ENCODE measurements at regions of chr10 and their contacts with region 1.

Region 1: DNA sequence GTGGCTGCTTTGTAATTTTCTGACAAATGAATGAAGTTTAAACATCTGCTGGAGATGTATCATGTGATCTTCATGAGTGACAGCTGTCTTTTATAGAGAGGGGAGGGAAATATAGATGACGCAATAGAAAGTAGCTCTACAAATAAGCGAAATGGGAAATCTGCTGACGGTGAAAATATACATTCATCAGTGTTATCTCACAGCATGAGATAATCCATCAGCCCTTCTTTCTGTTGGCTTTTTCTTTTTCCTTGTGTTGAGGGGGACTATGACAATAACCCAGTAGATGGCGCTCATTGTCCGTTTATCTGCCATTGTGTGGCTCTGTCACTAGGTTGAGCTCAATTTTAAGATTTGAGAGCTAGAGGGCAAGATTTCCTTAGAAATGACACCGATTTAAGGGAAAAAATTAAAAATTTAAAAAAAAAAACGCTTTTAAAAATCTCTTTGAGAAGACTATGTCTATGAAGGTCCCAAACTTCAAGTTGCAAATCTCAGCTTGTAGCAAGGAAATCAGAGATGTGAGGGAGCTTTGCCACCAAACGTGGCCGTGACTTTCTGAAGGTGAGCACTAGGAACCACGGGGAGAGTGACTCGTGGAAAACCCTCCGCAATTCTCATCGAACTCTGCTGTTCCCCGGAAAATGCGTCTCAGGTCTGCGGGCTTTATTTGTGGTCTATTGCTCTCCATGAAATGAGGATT is 114.6 kb upstream of the SFMBT2 start:
- DNase-seq: no peak
- H3K4me3 ChIP-seq: no peak overlapping the region
- H3K27ac ChIP-seq: no peak overlapping the region
- H3K4me1 ChIP-seq: no peaks in the 10 kb centered on the region
- H3K27me3 ChIP-seq: no peaks in the 10 kb centered on the region
- CTCF ChIP-seq: peak; percentile 67 to 85 (median 68)
- POLR2A ChIP-seq: no peak

Region 2: GRCh38 chr10:7687228-7687907 is 161.9 kb after region 1 on chr10:
- intact Hi-C with region 1: loop called (anchors 2 kb)
- DNase-seq: no peak
- H3K4me3 ChIP-seq: no peak overlapping the region
- H3K27ac ChIP-seq: no peak overlapping the region
- H3K4me1 ChIP-seq: no peaks in the 10 kb centered on the region
- H3K27me3 ChIP-seq: no peaks in the 10 kb centered on the region
- CTCF ChIP-seq: peak; percentile 81 to 95 (median 84)
- POLR2A ChIP-seq: no peak

Measured in vagina (tissue), 2 donors.